AG04450 (cell line): ENCODE measurements at regions of chr17 and their contacts with region 1.

Region 1: GRCh38 chr17:39730095-39730921 is at the start of gene MIEN1:
- DNase-seq: peak; percentile 45
- H3K4me3 ChIP-seq: peak within 1 kb of the TSS; percentile 86
- H3K27ac ChIP-seq: peak within 1 kb of the TSS; percentile 31
- H3K27me3 ChIP-seq: no peaks in the 10 kb centered on the region
- CTCF ChIP-seq: peak; percentile 76
- polyA plus RNA-seq, gene MIEN1: 31.9 and 45.4 TPM in 2 replicates

Region 2: GRCh38 chr17:39699818-39700147 is 30.5 kb before region 1 on chr17 and contains the start of gene ERBB2:
- CTCF ChIA-PET with region 1: interaction called, 20 read pairs
- POLR2A ChIA-PET with region 1: interaction called, 9 read pairs
- DNase-seq: peak; percentile 41
- H3K4me3 ChIP-seq: peak within 1 kb of the TSS; percentile 77
- H3K27ac ChIP-seq: no peak within 1 kb of the TSS
- H3K27me3 ChIP-seq: no peaks in the 10 kb centered on the region
- CTCF ChIP-seq: no peak
- polyA plus RNA-seq, gene ERBB2: 21.2 and 27.9 TPM in 2 replicates

Region 3: GRCh38 chr17:39704821-39705551 is 25.3 kb before region 1 on chr17:
- CTCF ChIA-PET with region 1: interaction called, 20 read pairs
- POLR2A ChIA-PET with region 1: interaction called, 9 read pairs
- DNase-seq: no peak
- H3K4me3 ChIP-seq: no peak overlapping the region
- H3K27ac ChIP-seq: no peak overlapping the region
- H3K27me3 ChIP-seq: no peaks in the 10 kb centered on the region
- CTCF ChIP-seq: peak; percentile 56

Region 4: DNA sequence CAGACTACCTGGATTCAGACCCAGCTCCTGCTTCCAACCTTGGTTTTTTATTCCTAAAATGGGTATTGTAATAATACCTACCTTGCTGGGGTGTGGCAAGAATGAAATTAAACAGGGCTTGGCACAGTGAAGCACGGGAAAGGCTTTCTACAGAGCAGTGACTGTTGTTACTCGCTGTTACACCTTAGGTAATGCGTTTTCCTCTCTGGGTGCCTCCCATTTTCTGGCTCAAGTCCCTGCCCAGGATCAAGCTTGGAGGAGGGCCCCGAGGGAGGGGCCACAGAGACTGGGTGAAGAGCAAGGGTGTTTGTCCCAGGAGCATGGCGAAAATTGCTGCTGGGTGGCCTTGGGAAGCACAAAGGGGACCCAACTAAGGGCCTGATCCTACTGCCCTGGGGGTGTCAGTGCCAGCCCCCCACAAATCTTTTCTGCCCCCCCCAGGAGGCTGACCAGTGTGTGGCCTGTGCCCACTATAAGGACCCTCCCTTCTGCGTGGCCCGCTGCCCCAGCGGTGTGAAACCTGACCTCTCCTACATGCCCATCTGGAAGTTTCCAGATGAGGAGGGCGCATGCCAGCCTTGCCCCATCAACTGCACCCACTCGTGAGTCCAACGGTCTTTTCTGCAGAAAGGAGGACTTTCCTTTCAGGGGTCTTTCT is 13.3 kb before region 1 on chr17:
- CTCF ChIA-PET with region 1: interaction called, 17 read pairs
- POLR2A ChIA-PET with region 1: interaction called, 5 read pairs
- DNase-seq: no peak
- H3K4me3 ChIP-seq: no peak overlapping the region
- H3K27ac ChIP-seq: no peak overlapping the region
- H3K27me3 ChIP-seq: no peaks in the 10 kb centered on the region
- CTCF ChIP-seq: no peak